Activated T-helper 2 cell treated with anti-CD3 and anti-CD28 coated beads, Interferon-gamma antibody, Interleukin-2, Interleukin-4, amounts not matched to agents 10 μg/mL and 5 μg/mL and 100 μg/mL, durations not matched to agents 14 hours and 24 hours and 36 hours (primary cell): ENCODE measurements at regions of chr19 and their contacts with region 1.

Region 1: GRCh38 chr19:7829561-7830271 is at the start of gene EVI5L:
- DNase-seq: peak; percentile 98
- H3K4me3 Mint-ChIP-seq: peak within 1 kb of the TSS; percentile 86
- H3K27ac Mint-ChIP-seq: peak within 1 kb of the TSS; percentile 77
- H3K4me1 Mint-ChIP-seq: peaks cover 11% of the 10 kb centered on the region
- H3K27me3 Mint-ChIP-seq: peaks cover 5% of the 10 kb centered on the region
- total RNA-seq, gene EVI5L: 3.8 and 4.5 TPM in 2 replicates

Region 2: DNA sequence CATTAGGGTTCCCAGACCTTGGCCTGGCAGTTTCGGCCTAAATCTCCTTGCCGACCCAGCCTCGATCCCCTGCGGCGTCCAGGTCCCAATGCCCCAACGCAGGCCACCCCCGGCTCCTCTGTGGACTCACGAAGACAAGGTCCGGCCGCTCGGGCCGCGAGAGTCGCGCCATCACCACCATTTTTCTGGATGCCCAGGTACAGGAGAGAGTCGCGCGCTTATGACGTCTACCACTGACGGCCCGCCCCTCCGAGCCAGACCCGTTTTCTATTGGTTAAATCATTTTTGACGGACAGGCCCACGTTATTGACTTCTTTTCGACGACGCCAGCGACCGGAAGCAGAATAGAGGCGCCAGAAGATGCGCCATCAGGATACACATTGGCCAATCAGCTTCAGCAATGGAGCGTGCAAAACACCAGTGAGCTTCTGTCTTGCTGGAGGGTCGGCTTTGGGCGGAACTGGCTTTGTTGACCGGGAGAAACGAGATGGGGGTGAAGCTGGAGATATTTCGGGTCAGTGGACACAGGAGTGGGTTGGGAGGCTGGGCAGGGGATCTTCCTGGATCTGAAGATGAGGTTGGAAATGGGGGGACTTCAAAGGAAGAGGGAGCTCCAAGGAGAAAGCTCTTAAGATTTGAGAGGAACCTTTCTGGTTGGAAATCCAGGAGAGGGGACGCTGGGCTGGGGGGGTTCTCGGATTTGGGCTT is 200.2 kb before region 1 on chr19 and contains the starts of genes PET100 and XAB2:
- intact Hi-C with region 1: loop called (anchors 1 kb)
- DNase-seq: peak; percentile 94
- H3K4me3 Mint-ChIP-seq: peak within 1 kb of the TSS; percentile 98
- H3K27ac Mint-ChIP-seq: peak within 1 kb of the TSS; percentile 98
- H3K4me1 Mint-ChIP-seq: peaks cover 24% of the 10 kb centered on the region
- H3K27me3 Mint-ChIP-seq: no peaks in the 10 kb centered on the region
- total RNA-seq, gene PET100: 95.7 and 113 TPM in 2 replicates
- total RNA-seq, gene XAB2: 43.0 and 44.3 TPM in 2 replicates

Region 3: DNA sequence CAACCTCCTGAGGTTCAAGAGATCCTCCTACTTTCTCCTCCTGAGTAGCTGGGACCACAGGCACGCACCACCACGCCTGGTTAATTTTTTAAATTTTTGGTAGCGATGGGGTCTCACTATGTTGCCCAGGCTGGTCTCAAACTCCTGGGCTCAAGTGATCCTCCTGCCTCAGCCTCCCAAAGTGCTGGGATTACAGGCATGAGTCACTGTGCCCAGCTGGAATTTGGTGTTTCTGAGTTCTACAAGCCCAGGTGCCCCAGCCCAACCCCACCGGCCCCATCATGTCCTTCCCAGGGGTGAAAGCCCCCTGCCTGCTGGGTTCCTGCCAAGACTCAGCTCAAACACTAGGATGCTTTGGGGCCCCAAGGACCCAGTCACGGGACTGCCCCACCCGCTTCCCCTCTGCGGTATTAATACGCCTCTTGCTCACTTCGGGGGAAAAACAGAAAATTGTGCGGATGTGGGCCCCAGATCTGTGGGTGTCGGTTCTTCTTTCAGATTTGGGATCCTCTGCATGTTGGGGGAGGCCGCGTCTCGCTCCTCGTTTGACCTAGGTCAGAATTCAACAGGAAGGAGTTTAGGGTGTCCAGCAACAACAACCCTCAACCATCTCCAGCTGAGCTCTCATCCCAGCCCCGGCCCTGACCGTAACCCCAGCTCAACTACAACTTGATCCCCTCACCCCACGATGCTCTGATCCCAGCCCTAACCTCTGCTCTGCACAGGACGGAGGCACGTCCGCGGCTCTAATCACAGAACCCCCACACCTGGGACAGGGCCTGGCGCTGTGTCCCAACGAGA is 124.1 kb before region 1 on chr19:
- intact Hi-C with region 1: no loop called
- DNase-seq: peak; percentile 64
- H3K4me3 Mint-ChIP-seq: peak overlapping the region; percentile 31
- H3K27ac Mint-ChIP-seq: peak overlapping the region; percentile 63
- H3K4me1 Mint-ChIP-seq: peaks cover 20% of the 10 kb centered on the region
- H3K27me3 Mint-ChIP-seq: peaks cover 12% of the 10 kb centered on the region

Region 4: GRCh38 chr19:7868676-7869452 is 39.1 kb after region 1 on chr19:
- intact Hi-C with region 1: loop called (anchors 5 kb)
- DNase-seq: peak; percentile 78
- H3K4me3 Mint-ChIP-seq: peak overlapping the region; percentile 63
- H3K27ac Mint-ChIP-seq: peak overlapping the region; percentile 28
- H3K4me1 Mint-ChIP-seq: peaks cover 20% of the 10 kb centered on the region
- H3K27me3 Mint-ChIP-seq: peaks cover 42% of the 10 kb centered on the region

Region 5: GRCh38 chr19:7970716-7971448 is 141.2 kb after region 1 on chr19:
- intact Hi-C with region 1: no loop called
- DNase-seq: no peak
- H3K4me3 Mint-ChIP-seq: no peak overlapping the region
- H3K27ac Mint-ChIP-seq: no peak overlapping the region
- H3K4me1 Mint-ChIP-seq: no peaks in the 10 kb centered on the region
- H3K27me3 Mint-ChIP-seq: no peaks in the 10 kb centered on the region